ENCODE measurements at regions of chr3 and their contacts with region 1.

Region 1: GRCh38 chr3:13452490-13453335 is 27.4 kb upstream of the HDAC11 start:
- DNase-seq: peak; percentile 28
- ATAC-seq: no peak
- H3K4me3 Mint-ChIP-seq: peak overlapping the region; percentile 84
- H3K27ac Mint-ChIP-seq: peak overlapping the region; percentile 89
- H3K4me1 Mint-ChIP-seq: peaks cover 18% of the 10 kb centered on the region
- H3K27me3 Mint-ChIP-seq: no peaks in the 10 kb centered on the region
- CTCF ChIP-seq: no peak

Region 2: GRCh38 chr3:13073326-13074005 is 379.2 kb before region 1 on chr3 and contains the start of gene IQSEC1:
- CTCF ChIA-PET with region 1: no interaction called
- POLR2A ChIA-PET with region 1: interaction called, 3 read pairs
- intact Hi-C with region 1: loop called (anchors 1 kb)
- DNase-seq: peak; percentile 76
- ATAC-seq: peak; percentile 66
- H3K4me3 Mint-ChIP-seq: peak within 1 kb of the TSS; percentile 86
- H3K27ac Mint-ChIP-seq: peak within 1 kb of the TSS; percentile 85
- H3K4me1 Mint-ChIP-seq: peaks cover 62% of the 10 kb centered on the region
- H3K27me3 Mint-ChIP-seq: no peaks in the 10 kb centered on the region
- CTCF ChIP-seq: no peak
- total RNA-seq, gene IQSEC1: 260 and 296 TPM in 2 replicates

Region 3: GRCh38 chr3:13200946-13201345 is 251.8 kb before region 1 on chr3:
- CTCF ChIA-PET with region 1: no interaction called
- POLR2A ChIA-PET with region 1: no interaction called
- intact Hi-C with region 1: loop called (anchors 2 kb)
- DNase-seq: no peak
- ATAC-seq: no peak
- H3K4me3 Mint-ChIP-seq: no peak overlapping the region
- H3K27ac Mint-ChIP-seq: no peak overlapping the region
- H3K4me1 Mint-ChIP-seq: peaks cover 13% of the 10 kb centered on the region
- H3K27me3 Mint-ChIP-seq: peaks cover 35% of the 10 kb centered on the region
- CTCF ChIP-seq: no peak

Region 4: GRCh38 chr3:13308380-13308801 is 144.3 kb before region 1 on chr3:
- CTCF ChIA-PET with region 1: interaction called, 11 read pairs
- POLR2A ChIA-PET with region 1: no interaction called
- intact Hi-C with region 1: loop called (anchors 1 kb)
- DNase-seq: no peak
- ATAC-seq: peak; percentile 52
- H3K4me3 Mint-ChIP-seq: no peak overlapping the region
- H3K27ac Mint-ChIP-seq: peak overlapping the region; percentile 38
- H3K4me1 Mint-ChIP-seq: no peaks in the 10 kb centered on the region
- H3K27me3 Mint-ChIP-seq: no peaks in the 10 kb centered on the region
- CTCF ChIP-seq: no peak

Region 5: DNA sequence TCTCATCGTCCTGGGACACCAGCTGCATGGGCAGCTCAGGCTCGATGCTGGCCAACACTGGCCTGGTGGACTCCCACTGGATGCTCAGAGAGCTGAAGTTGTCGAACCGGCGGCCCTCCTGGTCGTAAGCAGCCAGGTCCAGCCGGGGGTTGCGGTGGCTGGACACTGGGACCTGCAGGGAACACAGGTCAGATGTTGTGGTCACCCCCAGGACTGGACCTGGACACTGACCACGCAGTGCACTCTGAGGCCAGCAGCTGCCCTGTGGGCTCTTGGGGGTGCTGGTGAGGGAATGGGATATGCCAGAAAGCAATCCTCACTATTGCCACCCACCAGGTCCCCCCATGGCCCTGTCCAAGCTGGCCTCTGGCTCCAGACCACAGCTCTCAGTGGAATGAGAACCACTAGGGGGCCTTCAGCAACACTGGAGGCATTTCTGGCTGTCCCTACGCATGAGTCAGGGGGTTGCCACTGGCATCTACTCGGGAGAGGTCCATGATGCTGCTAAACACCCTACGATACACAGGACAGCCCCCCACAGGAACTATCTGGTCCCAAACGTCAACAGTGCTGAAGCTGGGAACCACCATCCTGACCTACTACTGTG is 98.7 kb before region 1 on chr3:
- CTCF ChIA-PET with region 1: interaction called, 19 read pairs
- POLR2A ChIA-PET with region 1: interaction called, 7 read pairs
- intact Hi-C with region 1: no loop called
- DNase-seq: no peak
- ATAC-seq: no peak
- H3K4me3 Mint-ChIP-seq: no peak overlapping the region
- H3K27ac Mint-ChIP-seq: no peak overlapping the region
- H3K4me1 Mint-ChIP-seq: peaks cover 20% of the 10 kb centered on the region
- H3K27me3 Mint-ChIP-seq: no peaks in the 10 kb centered on the region
- CTCF ChIP-seq: no peak

Region 6: DNA sequence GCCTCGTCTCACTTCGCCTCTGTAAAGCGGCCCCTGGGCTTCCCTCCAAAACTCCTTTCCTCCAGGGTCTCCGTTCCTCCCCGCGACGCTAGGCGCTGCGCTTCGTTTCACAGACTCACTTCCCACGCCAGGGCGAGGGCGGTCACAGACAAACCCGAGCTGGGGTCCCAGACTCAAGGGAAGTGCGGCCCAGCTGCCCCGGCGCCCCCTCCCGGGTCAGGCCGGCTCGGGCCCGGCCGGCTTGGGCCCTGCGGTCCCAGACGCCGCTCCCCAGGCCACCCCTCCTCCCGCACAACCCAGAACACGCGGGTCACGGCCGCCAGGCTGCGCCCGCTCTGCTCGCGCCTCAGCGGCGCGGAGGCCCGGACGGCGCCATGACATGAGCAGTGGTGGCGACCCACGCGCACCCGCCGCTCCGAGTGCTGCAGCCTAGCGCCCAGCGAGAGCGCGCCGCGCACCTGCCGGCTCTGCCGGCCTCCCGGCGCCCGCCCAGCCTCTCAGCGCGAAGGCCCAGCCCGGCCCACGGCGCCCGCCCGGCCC is 33.1 kb before region 1 on chr3:
- CTCF ChIA-PET with region 1: interaction called, 26 read pairs
- POLR2A ChIA-PET with region 1: interaction called, 40 read pairs
- intact Hi-C with region 1: loop called (anchors 1 kb)
- DNase-seq: peak; percentile 69
- ATAC-seq: peak; percentile 59
- H3K4me3 Mint-ChIP-seq: peak overlapping the region; percentile 91
- H3K27ac Mint-ChIP-seq: peak overlapping the region; percentile 98
- H3K4me1 Mint-ChIP-seq: peaks cover 62% of the 10 kb centered on the region
- H3K27me3 Mint-ChIP-seq: no peaks in the 10 kb centered on the region
- CTCF ChIP-seq: no peak

Measured in activated B cell treated with CpG ODN at 0.5 μM for 24 hours (primary cell).